ENCODE measurements at regions of chr12 and their contacts with region 1.

Region 1: GRCh38 chr12:44930972-44931600 is 55.0 kb upstream of the NELL2 start:
- DNase-seq: no peak
- ATAC-seq: peak; percentile 47
- H3K4me3 Mint-ChIP-seq: no peak overlapping the region
- H3K27ac Mint-ChIP-seq: no peak overlapping the region
- H3K4me1 Mint-ChIP-seq: no peaks in the 10 kb centered on the region
- H3K27me3 Mint-ChIP-seq: no peaks in the 10 kb centered on the region

Region 2: DNA sequence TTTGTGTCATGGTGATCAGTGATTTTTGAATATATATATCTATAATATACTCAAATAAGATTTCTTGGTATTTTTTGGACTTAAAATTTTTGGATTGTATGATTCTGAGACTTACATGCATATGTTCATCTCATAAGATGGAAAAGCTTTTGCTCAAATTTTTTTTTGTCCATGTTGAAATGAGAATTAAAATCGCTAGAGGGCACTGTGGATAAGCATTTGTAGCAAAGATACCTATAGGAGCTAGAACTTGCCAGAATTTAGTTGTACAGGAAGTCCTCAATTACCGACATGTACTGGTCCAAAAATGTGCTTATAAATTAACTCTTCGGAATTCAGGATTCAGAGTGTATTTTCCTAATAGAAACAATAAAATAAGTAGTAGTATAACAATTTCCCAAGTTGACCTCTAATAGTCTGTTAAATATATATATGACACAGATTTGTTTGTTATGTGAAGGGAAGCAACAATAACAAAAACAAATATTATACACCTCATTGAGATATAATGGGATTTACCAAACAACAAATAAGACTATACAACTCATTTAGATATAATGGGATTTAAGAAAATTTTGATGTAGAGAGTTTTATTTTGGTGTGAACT is 915.6 kb before region 1 on chr12:
- CTCF ChIA-PET with region 1: interaction called, 14 read pairs
- DNase-seq: no peak
- ATAC-seq: peak; percentile 60
- H3K4me3 Mint-ChIP-seq: no peak overlapping the region
- H3K27ac Mint-ChIP-seq: no peak overlapping the region
- H3K4me1 Mint-ChIP-seq: no peaks in the 10 kb centered on the region
- H3K27me3 Mint-ChIP-seq: no peaks in the 10 kb centered on the region

Region 3: GRCh38 chr12:44774815-44775411 is 156.2 kb before region 1 on chr12:
- CTCF ChIA-PET with region 1: interaction called, 11 read pairs
- DNase-seq: peak; percentile 56
- ATAC-seq: no peak
- H3K4me3 Mint-ChIP-seq: no peak overlapping the region
- H3K27ac Mint-ChIP-seq: no peak overlapping the region
- H3K4me1 Mint-ChIP-seq: no peaks in the 10 kb centered on the region
- H3K27me3 Mint-ChIP-seq: no peaks in the 10 kb centered on the region

Region 4: GRCh38 chr12:44812062-44812461 is 119.0 kb before region 1 on chr12:
- CTCF ChIA-PET with region 1: interaction called, 35 read pairs
- DNase-seq: peak; percentile 65
- ATAC-seq: peak; percentile 92
- H3K4me3 Mint-ChIP-seq: no peak overlapping the region
- H3K27ac Mint-ChIP-seq: no peak overlapping the region
- H3K4me1 Mint-ChIP-seq: peaks cover 20% of the 10 kb centered on the region
- H3K27me3 Mint-ChIP-seq: no peaks in the 10 kb centered on the region